ENCODE measurements at regions of chr14 and their contacts with region 1.

Region 1: DNA sequence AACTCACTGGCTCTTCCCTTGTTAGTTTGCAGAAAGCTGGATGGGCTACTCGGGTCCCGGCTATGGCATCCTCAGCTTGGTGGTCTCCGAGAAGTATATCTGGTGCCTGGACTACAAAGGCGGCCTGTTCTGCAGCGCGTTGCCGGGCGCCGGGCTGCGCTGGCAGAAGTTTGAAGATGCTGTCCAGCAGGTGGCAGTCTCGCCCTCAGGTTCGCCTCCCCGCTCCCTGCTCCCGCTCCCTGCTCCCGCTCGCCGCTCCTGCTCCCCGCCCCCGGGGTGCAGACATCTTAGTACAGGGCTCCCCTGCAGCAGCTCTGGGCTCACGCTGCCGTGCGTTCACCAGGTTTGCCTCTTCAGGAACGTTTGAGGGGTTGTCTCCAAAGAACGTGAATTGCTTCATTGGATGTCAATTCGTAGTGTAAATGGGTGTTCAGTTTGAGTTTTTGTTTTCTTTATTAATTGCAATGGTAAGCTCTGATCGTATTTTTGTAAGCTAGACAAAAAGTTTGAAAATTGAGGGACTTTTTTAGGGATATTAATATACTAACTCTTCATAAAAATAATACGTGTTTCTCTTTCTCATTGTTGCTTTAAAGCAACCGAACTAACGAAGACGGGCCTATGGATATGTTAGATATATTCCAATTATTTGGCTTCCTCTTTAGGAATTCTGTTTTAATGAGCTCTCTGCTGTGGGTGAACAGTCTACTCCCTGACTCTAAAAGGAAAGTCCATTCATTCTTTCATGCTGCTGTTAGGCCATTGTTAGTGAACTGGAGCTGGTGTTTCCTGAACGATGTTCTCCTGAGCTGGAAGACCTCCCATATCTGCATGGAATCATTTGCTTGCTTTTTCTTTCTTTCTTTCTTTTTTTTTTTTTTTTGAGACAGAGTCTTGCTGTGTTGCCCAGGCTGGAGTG is 71.3 kb downstream of the ANKRD9 start:
- H3K4me3 ChIP-seq: no peak overlapping the region
- H3K27ac ChIP-seq: no peak overlapping the region
- H3K4me1 ChIP-seq: no peaks in the 10 kb centered on the region
- CTCF ChIP-seq: peak; percentile 90

Region 2: DNA sequence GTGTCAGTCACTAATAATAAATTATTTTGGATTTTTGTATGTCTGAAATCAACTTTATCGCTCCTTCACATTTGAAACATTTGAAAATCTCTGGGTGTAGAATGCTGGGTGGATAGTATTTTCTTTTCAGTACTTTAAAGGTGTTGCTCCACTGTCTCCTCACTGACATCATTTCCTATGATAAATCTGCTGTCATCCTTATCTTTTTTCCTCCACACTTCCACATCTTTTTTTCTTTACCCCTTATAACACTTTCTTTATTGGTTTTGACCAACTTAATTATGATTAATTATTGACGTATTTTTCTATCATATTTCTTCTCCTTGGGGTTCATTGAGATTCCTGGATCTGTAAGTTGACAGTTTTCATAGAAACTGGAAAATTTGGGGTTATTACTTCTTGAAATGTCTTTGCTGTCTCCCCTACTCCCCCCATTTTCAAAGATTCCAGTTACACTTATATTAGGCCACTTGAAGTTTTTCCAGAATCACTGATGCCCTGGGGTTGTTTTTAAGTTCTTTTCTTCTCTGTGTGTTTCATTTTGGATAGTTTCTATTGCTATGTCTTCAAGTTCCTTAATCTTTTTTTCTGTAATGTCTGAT is 1054.4 kb before region 1 on chr14:
- CTCF ChIA-PET with region 1: no interaction called
- POLR2A ChIA-PET with region 1: no interaction called
- H3K4me3 ChIP-seq: no peak overlapping the region
- H3K27ac ChIP-seq: no peak overlapping the region
- H3K4me1 ChIP-seq: no peaks in the 10 kb centered on the region
- CTCF ChIP-seq: no peak

Region 3: GRCh38 chr14:102408724-102409123 is 29.5 kb before region 1 on chr14:
- CTCF ChIA-PET with region 1: interaction called, 14 read pairs
- POLR2A ChIA-PET with region 1: no interaction called
- H3K4me3 ChIP-seq: no peak overlapping the region
- H3K27ac ChIP-seq: no peak overlapping the region
- H3K4me1 ChIP-seq: no peaks in the 10 kb centered on the region
- CTCF ChIP-seq: no peak

Region 4: GRCh38 chr14:102508774-102509743 is 70.8 kb after region 1 on chr14:
- CTCF ChIA-PET with region 1: interaction called, 30 read pairs
- POLR2A ChIA-PET with region 1: no interaction called
- H3K4me3 ChIP-seq: peak overlapping the region; percentile 72
- H3K27ac ChIP-seq: peak overlapping the region; percentile 87
- H3K4me1 ChIP-seq: peaks cover 3% of the 10 kb centered on the region; the same call in 1 of the 2 replicates
- CTCF ChIP-seq: no peak

Region 5: DNA sequence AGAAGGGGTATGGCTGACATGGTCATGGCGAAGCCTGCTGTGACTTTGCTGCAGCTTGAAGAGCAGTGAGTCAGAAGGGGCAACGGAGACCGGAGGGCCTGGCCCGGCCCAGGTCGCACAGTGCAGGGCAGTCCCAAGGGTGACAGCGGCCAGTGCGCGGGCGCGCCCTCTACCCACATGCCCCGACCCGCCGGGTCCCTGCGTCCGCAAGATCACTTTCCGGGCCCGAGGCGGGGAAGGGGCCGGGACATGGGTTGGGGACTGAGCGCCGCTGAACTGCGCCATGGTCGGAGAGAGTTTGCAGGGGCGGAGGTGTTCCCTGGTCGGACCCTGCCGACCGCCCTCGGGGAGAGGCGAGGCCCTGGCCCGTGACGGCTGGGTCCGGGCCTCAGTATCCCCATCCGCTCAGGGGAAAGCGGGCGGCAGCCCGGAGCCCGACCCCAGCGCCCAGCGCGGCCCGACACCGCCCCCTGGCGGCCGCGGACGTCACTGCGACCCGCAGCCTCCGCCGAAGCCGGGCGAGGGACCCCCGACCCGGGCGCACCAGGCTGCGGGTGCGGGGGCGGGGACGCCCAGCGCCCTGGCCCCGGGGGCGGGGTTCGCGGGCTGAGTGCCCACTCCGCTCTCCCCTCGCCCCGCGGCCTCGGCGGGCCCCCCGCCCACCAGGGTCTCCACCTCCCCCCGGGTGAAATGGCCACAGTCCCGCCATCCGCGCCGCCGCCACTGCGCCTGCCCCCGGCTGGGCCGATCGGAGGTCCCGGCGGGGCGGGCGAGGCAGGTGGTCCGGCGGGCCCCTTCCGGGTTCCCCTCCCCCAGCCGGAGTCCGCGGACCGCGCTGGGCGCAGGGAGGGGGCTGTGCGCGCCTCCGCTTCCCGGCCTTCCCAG is 78.5 kb after region 1 on chr14:
- CTCF ChIA-PET with region 1: interaction called, 30 read pairs
- POLR2A ChIA-PET with region 1: interaction called, 5 read pairs
- H3K4me3 ChIP-seq: peak overlapping the region; percentile 40
- H3K27ac ChIP-seq: peak overlapping the region; percentile 49; the same call in 1 of the 2 replicates
- H3K4me1 ChIP-seq: no peaks in the 10 kb centered on the region
- CTCF ChIP-seq: peak; percentile 60

Region 6: DNA sequence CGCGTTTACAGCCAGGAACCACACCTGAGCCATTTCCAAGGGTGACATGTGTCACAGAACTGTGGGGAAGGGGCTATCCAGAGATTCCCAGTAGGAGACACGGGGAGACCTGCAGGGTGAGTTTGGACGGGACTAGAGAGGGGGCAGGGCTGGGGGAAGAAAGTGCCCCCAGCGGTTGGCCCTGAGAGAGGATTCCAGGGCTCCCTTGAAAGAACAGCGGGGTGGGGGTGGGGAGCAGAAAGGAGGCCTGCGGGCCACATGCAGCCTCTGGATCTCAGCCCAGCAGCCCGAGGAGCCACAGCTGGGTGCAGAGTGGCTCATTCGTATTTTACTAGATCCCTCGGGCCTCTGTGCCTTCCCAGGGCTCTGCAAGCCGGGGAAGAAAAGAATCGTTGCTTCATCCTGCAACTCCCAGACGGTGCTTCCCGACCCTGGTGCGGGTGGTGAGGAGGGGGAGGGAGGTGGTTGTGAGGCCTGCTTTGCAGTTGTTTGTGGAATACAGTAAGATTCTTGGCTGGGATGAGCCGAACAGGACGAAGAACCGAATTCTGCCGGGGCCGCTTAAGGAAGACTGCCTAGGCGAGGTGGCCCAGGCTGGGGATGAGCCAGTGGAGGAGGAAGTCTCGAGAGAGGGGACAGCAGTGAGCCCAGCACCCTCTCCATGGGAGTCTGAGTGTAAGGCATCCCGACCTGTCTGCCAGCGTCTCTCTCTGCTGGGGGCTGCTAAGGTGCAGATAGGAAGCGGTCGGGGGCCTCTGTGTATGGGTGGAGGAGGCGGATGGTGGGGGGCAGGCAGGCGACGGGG is 107.4 kb after region 1 on chr14:
- CTCF ChIA-PET with region 1: no interaction called
- POLR2A ChIA-PET with region 1: no interaction called
- H3K4me3 ChIP-seq: no peak overlapping the region
- H3K27ac ChIP-seq: no peak overlapping the region
- H3K4me1 ChIP-seq: no peaks in the 10 kb centered on the region
- CTCF ChIP-seq: no peak

Measured in HEK293 (cell line).